ENCODE measurements at regions of chr9 and their contacts with region 1.

Region 1: DNA sequence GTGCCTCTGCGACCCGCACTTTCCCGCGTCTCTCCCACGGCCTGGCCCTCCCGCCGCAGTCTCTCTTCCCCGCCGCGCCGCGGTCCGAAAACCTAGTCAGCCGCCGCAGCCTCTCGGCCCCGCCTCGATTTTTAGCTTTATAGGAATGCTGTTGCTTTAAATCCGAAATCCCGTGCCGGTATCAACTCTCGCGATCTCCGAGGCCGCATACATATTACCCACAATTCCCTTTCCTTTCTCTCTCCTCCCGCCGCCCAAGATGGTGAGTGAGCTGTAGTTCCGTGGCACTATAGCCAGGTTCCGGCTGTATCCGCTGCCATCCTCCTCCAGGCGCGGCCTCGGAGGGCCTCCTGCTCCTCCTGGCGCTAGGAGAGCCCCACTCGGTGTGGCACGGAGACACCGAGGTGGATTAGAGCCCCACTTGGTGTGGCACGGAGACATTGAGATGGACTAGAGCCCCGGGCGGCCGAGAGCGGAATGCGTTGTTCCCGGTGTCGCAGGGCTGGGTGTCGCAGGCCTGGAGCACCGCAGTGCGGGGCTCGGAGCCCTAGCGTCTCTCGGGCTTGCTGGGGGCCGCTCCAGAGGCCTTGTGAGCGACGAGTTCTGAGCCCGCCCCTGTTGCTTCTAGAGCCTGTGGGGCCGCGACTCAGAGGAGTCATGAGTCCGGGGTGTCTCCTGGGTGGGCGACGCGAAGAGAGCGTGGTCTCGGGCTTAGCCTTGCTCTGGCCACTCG is at the starts of genes MED22 and RPL7A:
- DNase-seq: peak; percentile 96
- ATAC-seq: peak; percentile 83
- H3K4me3 Mint-ChIP-seq: peak within 1 kb of the TSS; percentile 97
- H3K27ac Mint-ChIP-seq: peak within 1 kb of the TSS; percentile 97
- H3K4me1 Mint-ChIP-seq: peaks cover 36% of the 10 kb centered on the region
- H3K27me3 Mint-ChIP-seq: no peaks in the 10 kb centered on the region
- total RNA-seq, gene MED22: 22.9 to 26.4 TPM
- total RNA-seq, gene RPL7A: 3,179 to 3,246 TPM

Region 2: DNA sequence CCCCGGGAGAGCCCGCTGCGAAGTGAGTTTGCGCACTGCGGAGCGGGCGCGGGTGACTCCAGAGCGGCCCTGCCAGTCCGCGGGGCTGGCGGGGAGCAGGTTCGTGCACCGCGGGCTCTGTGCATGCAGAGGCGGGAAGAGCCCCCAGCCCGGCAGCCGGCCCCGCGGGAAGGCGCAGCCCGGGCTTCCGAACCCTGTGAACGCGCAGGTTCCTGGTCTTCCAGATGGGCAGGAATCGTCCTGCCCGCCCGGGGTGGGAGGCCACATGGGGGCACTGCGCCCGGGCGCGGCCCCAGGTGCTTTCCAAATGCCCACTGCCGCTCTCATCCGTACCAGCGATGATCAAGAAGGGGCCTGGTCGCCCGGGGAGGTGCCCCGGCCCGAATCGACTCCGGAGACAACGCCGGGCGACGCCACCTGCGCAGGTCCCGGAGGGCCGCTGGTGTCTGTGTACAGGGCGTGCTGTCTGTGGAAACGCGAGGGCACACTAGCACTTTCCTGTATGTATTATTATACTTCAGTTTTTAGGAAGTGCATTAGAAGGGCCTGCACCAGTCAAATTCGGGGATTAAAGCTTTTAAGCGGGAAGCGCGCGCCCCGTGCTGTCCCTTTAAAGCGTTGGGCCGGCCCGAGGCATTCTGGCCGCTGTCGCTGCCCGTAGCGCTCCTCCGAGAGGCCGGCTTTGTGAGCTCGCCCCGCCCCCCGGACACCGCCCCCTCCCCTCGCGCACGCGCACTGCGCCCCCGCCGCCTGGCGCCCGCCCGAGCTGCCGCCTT is 787.4 kb after region 1 on chr9 and contains the start of gene WDR5:
- CTCF ChIA-PET with region 1: no interaction called
- POLR2A ChIA-PET with region 1: no interaction called
- intact Hi-C with region 1: loop called in 1 of 2 experiments (anchors 5 kb)
- DNase-seq: peak; percentile 95
- ATAC-seq: peak; percentile 78
- H3K4me3 Mint-ChIP-seq: peak within 1 kb of the TSS; percentile 98
- H3K27ac Mint-ChIP-seq: peak within 1 kb of the TSS; percentile 90
- H3K4me1 Mint-ChIP-seq: peaks cover 31% of the 10 kb centered on the region
- H3K27me3 Mint-ChIP-seq: no peaks in the 10 kb centered on the region
- total RNA-seq, gene WDR5: 51.4 to 59.2 TPM